Activated naive CD4-positive, alpha-beta T cell treated with anti-CD3 and anti-CD28 coated beads for 36 hours (primary cell): ENCODE measurements at regions of chr5 and their contacts with region 1.

Region 1: GRCh38 chr5:137735555-137736284 is at the start of gene KLHL3:
- DNase-seq: peak; percentile 53
- H3K4me3 Mint-ChIP-seq: no peak within 1 kb of the TSS
- H3K27ac Mint-ChIP-seq: no peak within 1 kb of the TSS
- H3K4me1 Mint-ChIP-seq: peaks cover 53% of the 10 kb centered on the region
- H3K27me3 Mint-ChIP-seq: no peaks in the 10 kb centered on the region
- total RNA-seq, gene KLHL3: 1.7 to 2.0 TPM

Region 2: GRCh38 chr5:137665678-137666460 is 69.9 kb before region 1 on chr5:
- CTCF ChIA-PET with region 1: interaction called, 508 read pairs
- intact Hi-C with region 1: loop called (anchors 1 kb)
- DNase-seq: peak; percentile 67
- H3K4me3 Mint-ChIP-seq: no peak overlapping the region
- H3K27ac Mint-ChIP-seq: peak overlapping the region; percentile 25
- H3K4me1 Mint-ChIP-seq: peaks cover 24% of the 10 kb centered on the region
- H3K27me3 Mint-ChIP-seq: no peaks in the 10 kb centered on the region

Region 3: DNA sequence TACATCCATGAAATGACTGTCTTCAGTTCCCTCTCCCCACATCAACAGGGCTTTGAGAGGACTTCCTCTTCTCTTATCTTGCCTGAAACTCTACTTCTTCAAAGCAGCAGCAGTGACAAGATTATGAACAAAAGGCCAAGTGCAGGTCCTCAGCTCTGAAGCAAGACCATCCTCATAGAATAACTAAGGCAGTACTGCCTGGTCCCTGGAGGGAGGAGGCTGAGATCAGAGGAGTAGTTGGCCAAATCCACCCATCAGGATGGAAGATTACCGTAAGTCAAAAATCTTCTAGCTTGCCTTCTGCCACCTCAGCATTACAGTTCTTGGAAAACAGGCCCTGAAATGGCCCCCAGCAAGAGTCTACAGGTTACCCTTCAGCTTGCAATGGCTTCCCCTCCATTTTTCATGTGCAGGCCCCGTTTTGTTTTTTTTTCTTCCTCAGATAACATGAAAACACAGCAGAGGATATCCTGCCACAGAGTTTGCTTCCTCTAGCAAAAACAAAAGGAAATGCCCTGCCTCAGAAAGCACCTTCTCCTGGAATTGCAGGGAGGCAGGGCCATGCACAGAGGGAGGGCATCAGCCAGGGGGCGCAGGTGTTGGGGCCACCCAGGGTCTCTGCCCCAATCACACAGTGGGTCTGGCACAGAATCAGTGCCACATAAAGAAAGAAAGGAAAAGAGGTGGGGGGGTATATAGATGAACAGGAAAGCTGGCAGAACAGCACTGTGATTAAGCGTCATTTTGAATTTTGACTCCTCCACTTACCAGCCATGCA is 39.9 kb before region 1 on chr5:
- CTCF ChIA-PET with region 1: interaction called, 28 read pairs
- intact Hi-C with region 1: loop called (anchors 1 kb)
- DNase-seq: peak; percentile 32
- H3K4me3 Mint-ChIP-seq: peak overlapping the region; percentile 38
- H3K27ac Mint-ChIP-seq: peak overlapping the region; percentile 73
- H3K4me1 Mint-ChIP-seq: peaks cover 48% of the 10 kb centered on the region
- H3K27me3 Mint-ChIP-seq: no peaks in the 10 kb centered on the region